ENCODE measurements at regions of chr11 and their contacts with region 1.

Region 1: DNA sequence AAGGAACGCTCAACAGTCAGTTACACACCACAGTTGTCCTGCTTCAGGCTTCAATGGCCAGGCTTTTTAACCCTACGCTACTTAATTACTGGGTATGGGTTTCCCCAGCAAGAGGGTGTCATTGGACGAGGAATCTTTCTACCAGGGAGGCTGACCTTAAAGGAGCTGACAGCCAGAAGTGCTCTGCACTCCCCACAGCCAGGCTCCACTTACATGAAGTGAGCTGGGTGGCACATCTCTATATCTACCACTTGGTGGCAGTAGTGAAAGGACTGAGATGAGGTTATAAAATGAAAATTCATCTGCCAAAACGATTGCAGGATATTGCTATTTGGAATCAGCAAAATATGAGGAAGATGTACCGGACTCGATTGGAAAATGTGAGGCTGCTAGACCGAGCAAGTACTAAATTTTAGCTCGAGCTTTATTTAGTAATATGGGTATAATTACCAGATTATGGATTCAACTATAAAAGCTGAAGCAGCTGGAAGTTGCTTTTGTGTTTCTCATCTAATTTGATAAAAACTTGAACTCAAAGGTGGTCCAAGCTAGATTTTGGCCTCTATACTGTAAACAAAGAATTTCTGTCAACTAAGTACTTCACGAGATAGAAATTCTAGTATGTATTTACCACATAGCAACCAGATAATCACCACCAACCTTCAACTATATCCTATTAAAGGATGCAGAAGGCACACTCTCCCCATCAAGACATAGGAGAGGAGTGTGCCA is 53.9 kb upstream of the CEP126 start:
- DNase-seq: peak in 3 of 5 donors; percentile 1 to 8 (median 3)
- H3K4me3 ChIP-seq: no peak overlapping the region
- H3K4me3 Mint-ChIP-seq: no peak overlapping the region
- H3K27ac ChIP-seq: no peak overlapping the region
- H3K27ac Mint-ChIP-seq: no peak overlapping the region
- H3K4me1 ChIP-seq: no peaks in the 10 kb centered on the region
- H3K4me1 Mint-ChIP-seq: no peaks in the 10 kb centered on the region
- H3K27me3 ChIP-seq: no peaks in the 10 kb centered on the region
- H3K27me3 Mint-ChIP-seq: peaks cover 2 to 20% of the 10 kb centered on the region in 2 donors

Region 2: GRCh38 chr11:101880222-101880621 is 19.4 kb after region 1 on chr11:
- CTCF ChIA-PET with region 1: interaction called, 12 read pairs
- POLR2A ChIA-PET with region 1: no interaction called
- DNase-seq: no peak
- H3K4me3 ChIP-seq: no peak overlapping the region
- H3K4me3 Mint-ChIP-seq: no peak overlapping the region
- H3K27ac ChIP-seq: no peak overlapping the region
- H3K27ac Mint-ChIP-seq: no peak overlapping the region
- H3K4me1 ChIP-seq: no peaks in the 10 kb centered on the region
- H3K4me1 Mint-ChIP-seq: no peaks in the 10 kb centered on the region
- H3K27me3 ChIP-seq: peaks cover 3% of the 10 kb centered on the region
- H3K27me3 Mint-ChIP-seq: peaks cover 6 to 51% of the 10 kb centered on the region in 2 donors

Region 3: DNA sequence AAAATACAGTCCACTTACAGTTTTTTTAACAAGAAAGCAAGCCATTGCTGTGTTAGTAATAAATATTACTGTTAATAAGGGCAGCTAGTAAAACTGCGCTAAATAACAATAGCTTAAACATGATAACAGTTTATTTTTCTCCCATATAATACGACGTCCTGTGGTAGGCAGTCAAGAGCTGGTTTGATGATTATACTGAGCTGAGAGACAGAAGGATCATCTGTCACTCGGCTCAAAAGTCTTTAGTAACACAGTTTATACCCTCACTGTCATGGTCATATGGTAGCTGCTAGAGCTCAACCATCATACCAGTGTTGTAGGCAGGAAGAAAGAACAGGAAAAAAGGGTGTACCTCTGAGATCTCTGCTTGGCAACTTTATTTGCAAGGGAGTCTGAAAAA is 84.6 kb after region 1 on chr11:
- CTCF ChIA-PET with region 1: no interaction called
- POLR2A ChIA-PET with region 1: no interaction called
- DNase-seq: no peak
- H3K4me3 ChIP-seq: no peak overlapping the region
- H3K4me3 Mint-ChIP-seq: no peak overlapping the region
- H3K27ac ChIP-seq: no peak overlapping the region
- H3K27ac Mint-ChIP-seq: no peak overlapping the region
- H3K4me1 ChIP-seq: no peaks in the 10 kb centered on the region
- H3K4me1 Mint-ChIP-seq: no peaks in the 10 kb centered on the region
- H3K27me3 ChIP-seq: no peaks in the 10 kb centered on the region
- H3K27me3 Mint-ChIP-seq: no peaks in the 10 kb centered on the region

Region 4: GRCh38 chr11:102007567-102008437 is 146.9 kb after region 1 on chr11:
- CTCF ChIA-PET with region 1: interaction called, 49 read pairs
- POLR2A ChIA-PET with region 1: no interaction called
- DNase-seq: peak in 2 of 5 donors; percentile 33 to 36
- H3K4me3 ChIP-seq: no peak overlapping the region
- H3K4me3 Mint-ChIP-seq: no peak overlapping the region
- H3K27ac ChIP-seq: no peak overlapping the region
- H3K27ac Mint-ChIP-seq: no peak overlapping the region
- H3K4me1 ChIP-seq: no peaks in the 10 kb centered on the region
- H3K4me1 Mint-ChIP-seq: no peaks in the 10 kb centered on the region
- H3K27me3 ChIP-seq: no peaks in the 10 kb centered on the region
- H3K27me3 Mint-ChIP-seq: peaks cover 2 to 17% of the 10 kb centered on the region in 2 donors